Activated naive CD4-positive, alpha-beta T cell treated with anti-CD3 and anti-CD28 coated beads for 36 hours (primary cell): ENCODE measurements at regions of chr6 and their contacts with region 1.

Region 1: GRCh38 chr6:152184917-152185574 is 377.6 kb downstream of the ESR1 start:
- DNase-seq: peak; percentile 24
- H3K4me3 Mint-ChIP-seq: peak overlapping the region; percentile 79
- H3K27ac Mint-ChIP-seq: peak overlapping the region; percentile 94
- H3K4me1 Mint-ChIP-seq: peaks cover 69% of the 10 kb centered on the region
- H3K27me3 Mint-ChIP-seq: no peaks in the 10 kb centered on the region

Region 2: DNA sequence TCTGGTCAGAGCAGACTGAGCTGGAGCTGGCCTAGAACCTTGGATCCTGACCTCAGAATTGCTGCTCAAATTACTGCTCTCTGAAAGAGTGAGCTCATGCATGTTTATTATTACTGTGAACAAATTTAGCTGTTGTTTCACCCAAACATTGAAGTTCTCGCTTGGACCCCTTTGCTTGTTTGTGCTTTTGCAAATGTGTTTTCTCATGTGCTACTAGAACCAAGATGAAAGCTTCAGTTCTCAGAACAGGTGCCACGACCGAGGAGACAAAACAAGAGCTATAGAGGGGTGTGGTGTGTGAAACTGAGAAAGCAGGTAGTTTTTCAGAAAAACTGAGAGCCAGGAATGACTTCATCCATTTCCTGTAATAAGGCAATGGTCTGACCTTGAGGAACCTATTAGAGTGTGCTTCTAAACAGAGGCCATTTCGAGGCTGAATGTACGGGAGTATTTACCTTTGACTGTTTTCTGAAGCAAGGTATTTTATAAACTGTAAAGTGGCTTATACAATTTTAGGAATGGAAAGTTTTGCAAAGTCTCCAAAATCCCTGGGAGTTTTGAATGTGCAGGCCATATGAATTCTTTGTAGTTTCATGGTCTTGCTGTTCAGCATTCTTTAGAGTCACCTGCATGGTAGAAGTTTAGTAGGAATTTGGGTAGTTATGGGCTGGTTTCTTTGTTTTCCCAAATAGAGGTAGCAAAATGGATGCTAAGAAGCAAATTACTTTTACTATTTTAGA is 427.4 kb before region 1 on chr6:
- CTCF ChIA-PET with region 1: no interaction called
- intact Hi-C with region 1: loop called (anchors 2 kb)
- DNase-seq: peak; percentile 67
- H3K4me3 Mint-ChIP-seq: peak overlapping the region; percentile 36
- H3K27ac Mint-ChIP-seq: peak overlapping the region; percentile 80
- H3K4me1 Mint-ChIP-seq: peaks cover 37% of the 10 kb centered on the region
- H3K27me3 Mint-ChIP-seq: no peaks in the 10 kb centered on the region

Region 3: GRCh38 chr6:152170705-152171667 is 14.1 kb before region 1 on chr6:
- CTCF ChIA-PET with region 1: interaction called, 12 read pairs
- intact Hi-C with region 1: loop called (anchors 1 kb)
- DNase-seq: peak; percentile 82
- H3K4me3 Mint-ChIP-seq: peak overlapping the region; percentile 60
- H3K27ac Mint-ChIP-seq: peak overlapping the region; percentile 89
- H3K4me1 Mint-ChIP-seq: peaks cover 50% of the 10 kb centered on the region
- H3K27me3 Mint-ChIP-seq: no peaks in the 10 kb centered on the region

Region 4: DNA sequence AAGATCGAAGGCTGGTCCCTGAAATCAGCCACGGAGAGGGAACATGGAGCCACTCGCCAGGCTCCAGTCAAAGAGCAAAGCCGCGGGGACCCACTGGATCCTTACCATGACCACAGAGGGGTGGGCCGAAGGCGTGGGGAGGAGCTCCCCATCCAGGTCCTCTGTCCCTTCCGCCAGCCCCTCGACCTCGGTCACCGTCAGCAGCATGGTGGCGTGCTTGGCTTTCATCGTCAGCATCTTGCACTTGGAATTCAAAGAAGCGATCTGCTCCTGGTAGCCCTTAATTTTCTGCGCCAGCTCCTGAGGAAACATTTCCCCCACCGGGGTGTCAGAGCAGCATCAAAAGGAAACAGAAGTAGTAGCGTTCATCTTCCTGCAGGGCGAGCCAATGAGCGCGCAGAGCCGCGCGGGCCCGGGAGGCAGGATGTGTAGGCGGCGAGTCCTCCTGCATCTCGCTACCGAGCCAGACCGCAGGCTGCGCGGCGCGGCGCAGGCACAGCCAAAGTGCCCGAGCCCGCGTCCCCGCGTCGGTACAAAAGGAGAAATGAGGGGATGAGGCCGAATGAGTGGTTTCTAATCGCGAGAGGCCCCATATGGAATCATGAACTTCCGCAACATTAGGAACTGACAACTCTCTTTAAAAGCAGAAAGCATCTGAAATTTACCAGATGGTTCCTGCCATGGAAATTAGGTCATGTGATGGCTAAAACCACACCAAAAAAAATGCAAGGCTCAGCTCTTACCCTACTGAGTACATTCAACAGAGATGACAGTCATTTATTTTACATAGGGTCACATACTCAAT is 116.9 kb after region 1 on chr6:
- CTCF ChIA-PET with region 1: interaction called, 3 read pairs
- intact Hi-C with region 1: loop called (anchors 1 kb)
- DNase-seq: peak; percentile 93
- H3K4me3 Mint-ChIP-seq: peak overlapping the region; percentile 100
- H3K27ac Mint-ChIP-seq: peak overlapping the region; percentile 96
- H3K4me1 Mint-ChIP-seq: peaks cover 30% of the 10 kb centered on the region
- H3K27me3 Mint-ChIP-seq: no peaks in the 10 kb centered on the region

Region 5: DNA sequence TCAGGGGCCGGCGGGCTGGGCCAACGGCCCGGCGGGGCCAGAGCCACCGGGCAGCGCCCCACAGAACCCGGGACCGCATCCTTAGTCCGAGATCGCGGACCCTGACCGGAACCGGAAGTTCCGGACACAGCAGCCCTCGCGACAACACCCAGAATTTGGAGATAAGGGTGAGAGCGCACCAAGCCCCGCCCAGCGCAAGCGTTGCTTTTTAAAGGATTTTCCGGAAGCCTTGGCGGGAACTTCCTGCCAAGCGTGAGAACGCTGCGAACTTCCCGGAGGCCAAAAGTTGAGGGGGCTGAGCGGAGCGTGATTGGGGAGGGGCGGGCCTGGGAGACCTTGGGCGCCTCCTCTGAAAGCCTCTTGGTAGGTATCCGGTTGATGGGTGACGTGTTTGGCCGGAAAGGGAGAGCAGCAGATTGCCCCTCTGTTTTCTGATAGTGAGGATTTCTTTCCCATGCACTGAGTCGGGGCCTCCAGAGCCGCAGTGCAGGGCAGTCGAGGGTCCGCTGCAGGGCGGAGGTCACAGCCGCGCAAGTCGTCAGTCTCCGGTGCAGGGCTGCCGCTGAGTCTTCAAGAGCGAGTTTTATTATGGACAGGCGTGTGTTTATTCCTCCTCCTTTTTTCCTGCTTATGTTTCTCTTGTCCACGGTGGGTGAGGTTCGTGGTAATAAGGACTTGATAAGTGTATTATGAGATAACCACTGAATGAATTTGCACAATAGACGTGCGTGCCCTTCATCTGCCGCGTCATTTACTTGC is 817.7 kb after region 1 on chr6 and contains the start of gene MTRF1L:
- CTCF ChIA-PET with region 1: no interaction called
- intact Hi-C with region 1: loop called (anchors 5 kb)
- DNase-seq: peak; percentile 95
- H3K4me3 Mint-ChIP-seq: peak within 1 kb of the TSS; percentile 98
- H3K27ac Mint-ChIP-seq: peak within 1 kb of the TSS; percentile 94
- H3K4me1 Mint-ChIP-seq: peaks cover 33% of the 10 kb centered on the region
- H3K27me3 Mint-ChIP-seq: no peaks in the 10 kb centered on the region
- total RNA-seq, gene MTRF1L: 11.6 to 12.0 TPM